MCF 10A (cell line): ENCODE measurements at regions of chr18 and their contacts with region 1.

Region 1: DNA sequence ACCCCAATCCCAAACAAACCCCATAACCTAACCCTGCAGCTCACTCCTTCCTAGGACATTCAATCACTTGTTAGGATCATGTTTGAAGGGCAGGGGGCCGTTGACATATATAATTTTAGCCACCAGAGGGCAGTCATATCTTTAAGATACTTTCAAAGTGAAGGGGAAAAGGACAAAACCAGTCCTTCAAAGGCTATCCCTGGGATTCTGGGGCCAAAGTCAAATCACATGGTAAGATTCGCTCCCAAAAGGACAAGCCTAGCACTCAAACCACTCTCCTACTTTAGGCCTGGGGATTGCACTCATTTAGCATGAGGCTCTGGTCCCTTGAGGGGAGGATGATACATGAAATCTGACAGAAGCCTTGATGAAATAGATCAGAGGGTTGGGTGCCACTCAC is 44.6 kb downstream of the HAUS1 start:
- DNase-seq: peak; percentile 69
- H3K4me3 Mint-ChIP-seq: no peak overlapping the region
- H3K27ac Mint-ChIP-seq: peak overlapping the region; percentile 3
- H3K4me1 Mint-ChIP-seq: peaks cover 18% of the 10 kb centered on the region
- H3K27me3 Mint-ChIP-seq: no peaks in the 10 kb centered on the region
- CTCF ChIP-seq: peak; percentile 49

Region 2: GRCh38 chr18:46163941-46164499 is 15.2 kb after region 1 on chr18:
- CTCF ChIA-PET with region 1: interaction called, 38 read pairs
- POLR2A ChIA-PET with region 1: interaction called, 4 read pairs
- intact Hi-C with region 1: no loop called
- DNase-seq: no peak
- H3K4me3 Mint-ChIP-seq: no peak overlapping the region
- H3K27ac Mint-ChIP-seq: no peak overlapping the region
- H3K4me1 Mint-ChIP-seq: no peaks in the 10 kb centered on the region
- H3K27me3 Mint-ChIP-seq: no peaks in the 10 kb centered on the region
- CTCF ChIP-seq: no peak

Region 3: DNA sequence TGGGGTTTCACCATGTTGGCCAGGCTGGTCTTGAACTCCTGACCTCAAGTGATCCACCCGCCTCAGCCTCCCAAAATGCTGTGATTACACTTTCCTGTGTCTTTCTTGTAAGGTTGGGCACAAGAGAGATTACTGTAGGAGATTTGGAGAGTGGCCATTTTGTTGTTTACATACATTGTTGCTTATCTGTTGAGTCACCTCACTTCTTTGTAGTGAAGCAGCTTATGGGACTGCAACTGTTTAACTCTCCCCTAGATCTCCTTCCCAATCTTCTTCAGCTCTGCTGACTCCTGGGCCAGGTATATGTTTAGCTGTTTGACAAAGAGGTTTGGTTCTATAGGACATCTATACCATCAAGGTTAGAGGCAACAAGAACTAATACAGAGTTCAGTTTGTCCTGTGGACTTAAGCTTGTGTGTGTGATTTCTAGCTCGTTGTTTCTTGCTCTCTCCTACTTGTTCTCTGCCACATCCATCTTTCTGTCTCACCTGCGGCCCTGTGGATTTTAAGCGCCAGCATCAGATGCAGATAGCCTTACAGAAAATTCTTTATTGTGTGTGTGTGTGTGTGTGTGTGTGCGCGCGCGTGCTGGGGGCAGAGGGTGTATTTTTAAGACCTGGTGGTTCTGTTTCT is 50.8 kb after region 1 on chr18:
- CTCF ChIA-PET with region 1: no interaction called
- POLR2A ChIA-PET with region 1: no interaction called
- intact Hi-C with region 1: no loop called
- DNase-seq: peak; percentile 54
- H3K4me3 Mint-ChIP-seq: no peak overlapping the region
- H3K27ac Mint-ChIP-seq: peak overlapping the region; percentile 67
- H3K4me1 Mint-ChIP-seq: peaks cover 9% of the 10 kb centered on the region
- H3K27me3 Mint-ChIP-seq: no peaks in the 10 kb centered on the region
- CTCF ChIP-seq: no peak

Region 4: GRCh38 chr18:46213295-46213694 is 64.5 kb after region 1 on chr18:
- CTCF ChIA-PET with region 1: interaction called, 5 read pairs
- POLR2A ChIA-PET with region 1: no interaction called
- intact Hi-C with region 1: loop called (anchors 1 kb)
- DNase-seq: peak; percentile 30
- H3K4me3 Mint-ChIP-seq: no peak overlapping the region
- H3K27ac Mint-ChIP-seq: no peak overlapping the region
- H3K4me1 Mint-ChIP-seq: peaks cover 11% of the 10 kb centered on the region
- H3K27me3 Mint-ChIP-seq: no peaks in the 10 kb centered on the region
- CTCF ChIP-seq: peak; percentile 52